ENCODE measurements at regions of chr7 and their contacts with region 1.

Region 1: GRCh38 chr7:95596198-95597063 is at the start of gene PDK4:
- DNase-seq: peak; percentile 93 to 98 (median 96)
- ATAC-seq: peak; percentile 94 to 97 (median 96)
- H3K4me3 ChIP-seq: peak within 1 kb of the TSS; percentile 62 to 91 (median 84)
- H3K27ac ChIP-seq: peak within 1 kb of the TSS; percentile 94 to 100 (median 95)
- H3K4me1 ChIP-seq: peaks cover 0 to 23% (median 6%) of the 10 kb centered on the region in 4 donors
- H3K27me3 ChIP-seq: no peaks in the 10 kb centered on the region
- CTCF ChIP-seq: no peak
- POLR2A ChIP-seq: peak; percentile 97
- total RNA-seq, gene PDK4: 7.9 to 109 (median 79.0) TPM

Region 2: GRCh38 chr7:95126053-95126709 is 470.2 kb before region 1 on chr7:
- intact Hi-C with region 1: no loop called
- DNase-seq: no peak
- ATAC-seq: no peak
- H3K4me3 ChIP-seq: no peak overlapping the region
- H3K27ac ChIP-seq: no peak overlapping the region
- H3K4me1 ChIP-seq: no peaks in the 10 kb centered on the region
- H3K27me3 ChIP-seq: no peaks in the 10 kb centered on the region
- CTCF ChIP-seq: no peak
- POLR2A ChIP-seq: no peak

Region 3: GRCh38 chr7:95549818-95550529 is 46.5 kb before region 1 on chr7:
- intact Hi-C with region 1: loop called in 1 of 2 experiments (anchors 5 kb)
- DNase-seq: peak; percentile 69 to 96 (median 89)
- ATAC-seq: peak; percentile 82 to 94 (median 88)
- H3K4me3 ChIP-seq: peak overlapping the region in 1 of 3 donors; percentile 20
- H3K27ac ChIP-seq: peak overlapping the region; percentile 56 to 94 (median 93)
- H3K4me1 ChIP-seq: peaks cover 0 to 76% (median 36%) of the 10 kb centered on the region in 4 donors
- H3K27me3 ChIP-seq: no peaks in the 10 kb centered on the region
- CTCF ChIP-seq: no peak
- POLR2A ChIP-seq: peak; percentile 64